SK-N-SH (cell line): ENCODE measurements at regions of chr14 and their contacts with region 1.

Region 1: DNA sequence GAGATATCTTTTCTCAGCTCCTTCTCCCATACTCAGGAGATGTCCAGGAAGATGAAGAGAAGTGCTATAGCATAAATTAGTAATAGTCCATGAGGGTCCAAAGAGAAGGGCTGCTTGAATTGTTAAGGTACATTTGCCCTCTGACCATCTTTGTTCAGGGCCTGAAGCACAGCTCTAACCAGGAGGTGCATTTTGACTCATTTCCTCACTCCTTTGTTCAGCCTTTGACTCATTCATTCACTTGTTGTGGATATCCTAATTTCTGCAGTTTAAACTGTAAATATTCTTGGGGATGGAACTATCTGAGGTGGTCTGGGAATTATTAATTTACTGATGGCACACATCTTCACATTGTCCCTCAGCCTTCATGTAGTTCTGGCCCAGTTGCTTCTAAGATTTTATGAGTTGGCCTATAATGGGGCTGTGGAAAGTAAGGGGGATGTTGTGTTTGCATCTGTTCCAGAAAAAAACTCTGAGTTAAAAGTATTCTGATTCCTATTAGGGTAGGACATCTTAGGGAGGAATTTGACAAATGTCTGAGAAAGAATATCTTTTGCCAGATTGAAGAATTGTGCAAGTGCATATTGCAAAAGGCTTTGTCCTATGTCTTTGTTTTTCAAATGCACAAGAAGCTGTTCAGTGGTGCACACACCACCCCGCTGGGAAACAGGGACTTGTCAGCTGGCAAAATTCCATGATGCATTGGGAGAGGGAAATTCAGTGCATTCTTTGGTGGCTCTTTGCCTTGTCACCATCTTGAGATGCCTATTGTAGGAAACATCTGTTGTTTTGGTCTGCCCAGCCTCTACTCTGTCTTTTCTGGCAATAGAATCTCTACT is 22.1 kb downstream of the SMOC1 start:
- DNase-seq: no peak
- H3K4me3 ChIP-seq: no peak overlapping the region
- H3K27ac ChIP-seq: no peak overlapping the region
- H3K4me1 ChIP-seq: no peaks in the 10 kb centered on the region
- H3K27me3 ChIP-seq: no peaks in the 10 kb centered on the region
- CTCF ChIP-seq: no peak
- EP300 ChIP-seq: no peak
- RAD21 ChIP-seq: no peak

Region 2: DNA sequence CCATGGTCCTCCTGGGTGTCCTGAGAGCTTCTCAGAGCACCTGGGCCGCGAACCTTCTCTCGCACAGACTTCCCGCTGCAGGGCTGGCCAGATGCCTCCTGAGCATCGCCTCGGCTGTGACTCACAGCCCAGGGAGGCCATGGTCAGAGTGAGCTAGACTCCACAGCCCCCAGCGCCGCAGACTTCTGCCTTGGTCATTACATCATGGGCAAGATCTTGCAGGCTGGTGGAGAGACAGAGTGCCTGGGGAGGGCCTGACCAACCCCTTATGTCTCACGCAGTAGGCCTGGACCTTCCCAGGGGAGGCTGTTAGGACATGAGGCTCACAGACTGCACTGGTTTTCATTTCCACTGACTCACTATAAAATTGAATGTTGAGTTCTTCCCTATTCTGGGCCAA is 19.7 kb after region 1 on chr14:
- CTCF ChIA-PET with region 1: interaction called, 11 read pairs
- POLR2A ChIA-PET with region 1: no interaction called
- DNase-seq: no peak
- H3K4me3 ChIP-seq: no peak overlapping the region
- H3K27ac ChIP-seq: no peak overlapping the region
- H3K4me1 ChIP-seq: peaks cover 0 to 11% of the 10 kb centered on the region in 2 experiments; a peak in 1 of 4 replicates
- H3K27me3 ChIP-seq: no peaks in the 10 kb centered on the region
- CTCF ChIP-seq: no peak
- EP300 ChIP-seq: no peak
- RAD21 ChIP-seq: no peak